Prostate gland (tissue), 2 donors: ENCODE measurements at regions of chr5 and their contacts with region 1.

Region 1: DNA sequence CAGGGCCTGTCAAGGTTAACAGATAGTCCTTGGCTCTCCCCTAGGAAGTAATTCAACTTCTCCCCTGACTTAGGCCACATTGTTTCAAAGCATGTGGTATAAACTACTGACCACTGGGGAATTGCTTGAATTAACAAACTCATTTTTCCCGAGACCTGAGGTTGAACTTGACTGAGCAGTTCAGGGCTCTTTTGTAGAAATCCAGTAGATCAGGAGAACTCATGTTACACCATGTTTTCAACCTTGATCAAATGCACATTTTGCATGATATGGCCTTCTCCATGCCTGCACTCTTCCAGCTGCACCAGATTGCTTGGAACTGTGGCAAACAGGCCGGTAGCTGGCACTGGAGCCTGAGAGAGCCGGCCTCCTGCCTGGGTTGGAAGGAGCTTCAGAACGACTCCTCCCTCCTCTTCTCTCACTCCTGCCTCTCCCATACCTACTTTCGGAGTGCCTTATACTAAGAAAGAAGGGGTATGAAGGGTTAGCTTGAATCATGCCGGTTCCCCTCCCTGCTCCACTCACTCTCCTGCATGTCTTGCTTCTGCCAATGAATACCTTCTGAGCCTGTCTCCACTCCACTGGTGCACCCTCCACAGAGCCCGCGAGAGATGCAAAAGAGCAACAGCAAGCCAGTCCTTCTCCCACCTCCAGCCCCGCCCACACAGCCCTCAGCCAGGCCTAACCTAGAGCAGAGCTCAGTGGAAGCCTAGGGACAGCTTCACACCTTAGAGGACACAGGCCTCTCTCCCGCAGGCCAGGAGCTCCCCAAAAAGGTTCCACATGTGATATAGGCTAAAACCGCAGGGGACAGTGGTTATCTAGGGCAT is 159.4 kb downstream of the MACROH2A1 start:
- DNase-seq: no peak
- H3K4me3 ChIP-seq: no peak overlapping the region
- H3K27ac ChIP-seq: no peak overlapping the region
- H3K4me1 ChIP-seq: no peaks in the 10 kb centered on the region
- H3K27me3 ChIP-seq: no peaks in the 10 kb centered on the region
- CTCF ChIP-seq: no peak
- POLR2A ChIP-seq: no peak

Region 2: DNA sequence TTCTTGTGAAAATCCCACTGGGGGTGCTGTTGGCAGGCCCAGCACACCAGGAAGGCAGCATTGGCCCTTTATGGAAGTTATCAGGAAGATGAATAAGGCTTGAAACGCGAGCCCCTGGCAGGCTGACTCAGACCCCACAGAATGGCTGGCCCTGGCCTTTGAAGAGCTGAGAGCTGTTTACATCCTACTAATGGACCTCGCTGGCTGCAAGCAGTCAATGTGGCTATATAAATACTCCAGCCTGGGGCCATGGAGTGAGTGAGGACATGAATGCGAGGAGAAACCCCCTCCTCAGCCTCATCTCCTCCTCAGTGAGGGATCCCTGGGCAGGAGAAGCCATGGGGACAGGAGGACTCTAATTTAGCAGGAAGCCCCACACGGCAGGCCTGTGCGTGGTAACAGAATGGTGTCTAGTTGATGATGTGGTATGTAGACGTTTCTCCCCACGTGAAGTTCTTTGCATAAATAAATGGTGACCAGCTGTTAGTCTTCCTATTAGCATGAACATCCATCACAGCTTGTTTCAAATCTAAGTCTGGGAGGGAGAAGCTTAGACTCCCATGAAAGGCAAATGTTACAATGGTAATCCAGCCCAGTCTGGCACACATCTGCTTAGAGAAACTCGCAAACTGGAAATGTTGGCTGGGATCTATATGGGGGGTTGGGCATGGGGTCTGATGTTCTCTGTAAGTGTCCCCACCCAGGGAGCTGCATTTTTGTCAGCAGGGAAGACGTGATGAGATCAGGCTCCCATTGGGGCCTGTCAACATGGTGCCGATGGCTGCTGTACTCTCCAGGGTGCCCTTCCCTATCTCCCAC is 30.6 kb before region 1 on chr5:
- intact Hi-C with region 1: loop called (anchors 2 kb)
- DNase-seq: no peak
- H3K4me3 ChIP-seq: no peak overlapping the region
- H3K27ac ChIP-seq: no peak overlapping the region
- H3K4me1 ChIP-seq: no peaks in the 10 kb centered on the region
- H3K27me3 ChIP-seq: no peaks in the 10 kb centered on the region
- CTCF ChIP-seq: no peak
- POLR2A ChIP-seq: no peak